B cell (primary cell): ENCODE measurements at regions of chrX and their contacts with region 1.

Region 1: GRCh38 chrX:76248901-76249300 is 76.0 kb downstream of the PBDC1 start:
- DNase-seq: no peak
- ATAC-seq: no peak
- H3K4me3 ChIP-seq: no peak overlapping the region
- H3K4me3 Mint-ChIP-seq: no peak overlapping the region
- H3K27ac ChIP-seq: no peak overlapping the region
- H3K27ac Mint-ChIP-seq: no peak overlapping the region
- H3K4me1 ChIP-seq: peaks cover 2 to 7% of the 10 kb centered on the region in 2 donors
- H3K4me1 Mint-ChIP-seq: peaks cover 16% of the 10 kb centered on the region
- H3K27me3 ChIP-seq: no peaks in the 10 kb centered on the region
- H3K27me3 Mint-ChIP-seq: no peaks in the 10 kb centered on the region
- CTCF ChIP-seq: no peak

Region 2: GRCh38 chrX:76155786-76156185 is 93.1 kb before region 1 on chrX:
- CTCF ChIA-PET with region 1: interaction called, 5 read pairs
- POLR2A ChIA-PET with region 1: no interaction called
- intact Hi-C with region 1: loop called (anchors 5 kb)
- DNase-seq: no peak
- ATAC-seq: no peak
- H3K4me3 ChIP-seq: no peak overlapping the region
- H3K4me3 Mint-ChIP-seq: no peak overlapping the region
- H3K27ac ChIP-seq: no peak overlapping the region
- H3K27ac Mint-ChIP-seq: no peak overlapping the region
- H3K4me1 ChIP-seq: no peaks in the 10 kb centered on the region
- H3K4me1 Mint-ChIP-seq: no peaks in the 10 kb centered on the region
- H3K27me3 ChIP-seq: peaks cover 0 to 13% (median 0%) of the 10 kb centered on the region in 4 experiments
- H3K27me3 Mint-ChIP-seq: no peaks in the 10 kb centered on the region
- CTCF ChIP-seq: no peak